Head of caudate nucleus (tissue), 42 donors: ENCODE measurements at regions of chr17 and their contacts with region 1.

Region 1: DNA sequence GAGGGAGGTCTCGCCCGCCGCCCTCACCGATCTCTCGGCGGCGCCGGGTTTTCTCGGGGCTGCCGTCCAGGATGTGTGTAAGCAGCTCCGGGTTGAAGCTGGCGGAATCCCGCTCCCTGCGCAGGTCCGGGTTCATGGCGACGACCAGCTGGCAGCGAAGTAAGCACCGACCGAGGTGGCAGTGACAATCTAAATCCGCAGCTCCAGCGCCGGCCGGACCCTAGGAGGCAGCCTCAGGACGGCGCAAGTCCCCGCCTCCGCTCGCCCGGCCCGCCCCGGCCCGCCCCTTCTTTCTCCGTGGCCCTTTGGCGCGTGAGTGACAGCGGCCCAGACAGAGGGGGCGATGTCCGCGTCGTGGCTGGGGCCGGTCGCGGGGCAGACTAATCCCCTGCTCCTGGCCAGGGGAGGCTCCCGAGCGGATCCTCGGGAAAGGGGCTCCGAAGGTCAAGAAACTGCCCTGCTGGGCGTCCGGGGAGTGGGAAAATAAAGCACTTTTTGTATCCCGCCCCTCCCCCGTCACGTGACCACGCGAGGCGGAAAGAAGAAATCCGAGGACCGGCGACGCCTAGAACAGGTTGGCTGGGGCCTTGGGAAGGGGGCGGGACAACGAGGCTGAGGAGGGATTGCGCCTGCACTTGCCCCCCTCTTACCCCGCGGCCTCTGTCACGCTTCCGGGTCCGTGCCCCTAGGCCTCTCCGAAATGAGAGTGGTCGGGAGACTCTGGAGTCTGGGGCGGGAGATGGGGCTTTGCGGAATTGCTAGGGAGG is at the starts of genes ACOX1 and TEN1:
- DNase-seq: peak; percentile 95 to 100 (median 98)

Region 2: GRCh38 chr17:75927286-75927922 is 51.7 kb before region 1 on chr17:
- intact Hi-C with region 1: no loop called
- DNase-seq: peak in 1 of 42 donors; percentile 38

Region 3: GRCh38 chr17:75940724-75941441 is 38.2 kb before region 1 on chr17 and contains the start of gene FBF1:
- intact Hi-C with region 1: loop called (anchors 5 kb)
- DNase-seq: peak; percentile 92 to 99 (median 98)